Aorta (tissue), 5 donors: ENCODE measurements at regions of chr11 and their contacts with region 1.

Region 1: GRCh38 chr11:12159351-12160099 is 49.1 kb downstream of the MICAL2 start:
- DNase-seq: peak in 1 of 2 donors; percentile 62
- ATAC-seq: no peak
- H3K4me3 ChIP-seq: no peak overlapping the region
- H3K27ac ChIP-seq: peak overlapping the region; percentile 83 to 84
- H3K4me1 ChIP-seq: peaks cover 7 to 35% of the 10 kb centered on the region in 2 donors
- H3K27me3 ChIP-seq: no peaks in the 10 kb centered on the region

Region 2: DNA sequence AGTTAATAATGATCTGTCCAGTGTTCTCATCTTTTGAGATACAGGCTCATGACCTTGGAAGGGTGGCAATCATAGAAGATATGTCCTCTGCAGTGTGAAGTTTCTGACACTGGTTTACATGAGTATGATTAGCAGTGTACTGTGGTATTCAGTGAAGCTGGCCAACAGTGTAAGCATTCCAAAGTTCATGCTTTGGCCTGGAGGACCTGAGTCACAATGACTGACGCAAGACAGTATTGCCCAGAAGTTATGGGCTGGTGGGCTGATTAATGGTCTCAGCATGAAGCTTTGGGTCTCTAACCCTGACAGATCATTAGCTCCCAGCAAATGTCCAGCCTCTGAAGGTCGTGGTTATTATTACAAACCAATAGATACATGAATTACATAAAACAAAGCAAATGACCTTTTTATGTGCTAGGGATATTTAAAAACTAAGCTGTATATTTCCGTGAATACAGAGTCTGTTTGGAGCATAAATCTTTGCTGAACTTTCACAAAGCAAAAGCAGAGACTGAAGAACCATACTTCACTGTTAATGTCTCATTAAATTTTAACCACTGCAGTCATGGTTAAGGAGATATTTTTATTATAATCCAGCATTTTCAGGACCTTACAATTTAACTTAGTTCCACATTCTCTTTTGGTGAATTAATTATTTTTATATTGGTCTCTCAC is 346.1 kb before region 1 on chr11:
- intact Hi-C with region 1: no loop called
- DNase-seq: peak; percentile 50 to 73
- ATAC-seq: peak; percentile 90
- H3K4me3 ChIP-seq: no peak overlapping the region
- H3K27ac ChIP-seq: no peak overlapping the region
- H3K4me1 ChIP-seq: no peaks in the 10 kb centered on the region
- H3K27me3 ChIP-seq: no peaks in the 10 kb centered on the region

Region 3: DNA sequence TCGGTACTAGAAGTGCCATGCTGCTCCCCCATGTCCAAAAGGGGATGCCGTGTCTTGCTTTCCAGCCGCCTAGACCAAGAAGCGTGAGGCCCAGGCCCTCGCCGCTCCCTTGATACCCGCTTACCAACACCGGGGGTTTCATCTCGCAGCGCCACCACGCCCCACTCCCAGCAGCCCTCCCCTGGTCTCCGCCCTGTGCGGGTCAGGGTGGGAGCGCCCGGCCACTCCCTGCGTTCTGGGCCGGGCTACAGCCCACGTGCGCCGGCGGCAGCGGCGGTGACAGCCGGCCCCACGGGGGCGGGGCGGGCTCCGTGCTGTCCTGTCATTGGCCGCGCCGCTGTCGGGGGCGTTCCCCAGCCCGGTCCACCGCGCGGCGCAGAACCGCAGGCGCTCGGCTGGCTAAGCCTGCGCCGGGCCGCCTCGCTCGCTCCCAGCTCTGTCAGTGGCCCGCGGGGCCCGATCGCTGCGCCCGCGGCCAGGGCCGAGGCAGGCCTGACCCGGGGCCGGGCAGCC is 49.3 kb before region 1 on chr11 and contains the start of gene MICAL2:
- intact Hi-C with region 1: loop called in 1 of 2 experiments (anchors 5 kb)
- DNase-seq: peak; percentile 94 to 96
- ATAC-seq: peak; percentile 95
- H3K4me3 ChIP-seq: peak within 1 kb of the TSS; percentile 63 to 69
- H3K27ac ChIP-seq: peak within 1 kb of the TSS; percentile 83 to 90
- H3K4me1 ChIP-seq: peaks cover 2 to 5% of the 10 kb centered on the region in 2 donors
- H3K27me3 ChIP-seq: no peaks in the 10 kb centered on the region
- total RNA-seq, gene MICAL2: 315 to 605 TPM

Region 4: DNA sequence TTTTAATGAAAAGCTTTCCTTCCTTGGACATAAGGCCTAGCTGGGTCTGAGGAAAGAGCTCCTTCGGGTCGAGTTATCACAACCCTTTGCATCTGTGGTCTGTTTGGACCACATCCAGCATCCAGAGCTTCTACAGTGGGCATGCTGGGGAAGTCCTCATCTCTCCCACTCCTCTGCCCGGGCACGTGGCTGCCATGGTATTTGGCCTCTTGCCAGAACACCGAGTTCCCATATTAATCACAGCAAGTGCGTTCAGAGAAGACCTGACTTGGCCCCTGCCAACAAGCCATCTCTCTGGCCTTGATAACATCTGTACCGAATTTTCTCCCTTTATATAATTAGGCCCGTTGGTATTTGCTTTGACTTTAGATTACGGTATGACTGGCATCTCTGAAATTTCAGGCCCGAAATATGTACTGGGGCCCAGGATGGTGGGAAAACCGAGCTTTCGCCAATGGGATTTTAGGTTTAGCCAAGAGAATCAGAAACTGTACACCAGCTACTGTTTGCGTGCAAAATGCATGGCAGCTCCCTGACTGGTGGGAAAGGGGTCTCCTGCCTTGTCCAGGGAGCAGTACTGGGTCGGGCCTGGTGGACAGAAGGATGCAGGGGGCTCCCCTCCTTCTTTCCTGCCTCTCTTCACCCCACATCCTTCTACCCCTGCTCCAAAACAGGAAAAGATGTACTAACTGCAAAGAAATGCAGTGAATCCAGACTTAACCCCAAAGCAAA is 40.9 kb after region 1 on chr11:
- intact Hi-C with region 1: loop called in 1 of 2 experiments (anchors 5 kb)
- DNase-seq: peak; percentile 83 to 85
- ATAC-seq: no peak
- H3K4me3 ChIP-seq: no peak overlapping the region
- H3K27ac ChIP-seq: peak overlapping the region; percentile 95 to 99
- H3K4me1 ChIP-seq: peaks cover 9 to 11% of the 10 kb centered on the region in 2 donors
- H3K27me3 ChIP-seq: no peaks in the 10 kb centered on the region

Region 5: GRCh38 chr11:12235947-12236743 is 76.6 kb after region 1 on chr11:
- intact Hi-C with region 1: loop called (anchors 2 to 5 kb)
- DNase-seq: peak in 1 of 2 donors; percentile 68
- ATAC-seq: peak; percentile 53
- H3K4me3 ChIP-seq: no peak overlapping the region
- H3K27ac ChIP-seq: peak overlapping the region; percentile 98 to 99
- H3K4me1 ChIP-seq: peaks cover 3 to 7% of the 10 kb centered on the region in 2 donors
- H3K27me3 ChIP-seq: no peaks in the 10 kb centered on the region

Region 6: DNA sequence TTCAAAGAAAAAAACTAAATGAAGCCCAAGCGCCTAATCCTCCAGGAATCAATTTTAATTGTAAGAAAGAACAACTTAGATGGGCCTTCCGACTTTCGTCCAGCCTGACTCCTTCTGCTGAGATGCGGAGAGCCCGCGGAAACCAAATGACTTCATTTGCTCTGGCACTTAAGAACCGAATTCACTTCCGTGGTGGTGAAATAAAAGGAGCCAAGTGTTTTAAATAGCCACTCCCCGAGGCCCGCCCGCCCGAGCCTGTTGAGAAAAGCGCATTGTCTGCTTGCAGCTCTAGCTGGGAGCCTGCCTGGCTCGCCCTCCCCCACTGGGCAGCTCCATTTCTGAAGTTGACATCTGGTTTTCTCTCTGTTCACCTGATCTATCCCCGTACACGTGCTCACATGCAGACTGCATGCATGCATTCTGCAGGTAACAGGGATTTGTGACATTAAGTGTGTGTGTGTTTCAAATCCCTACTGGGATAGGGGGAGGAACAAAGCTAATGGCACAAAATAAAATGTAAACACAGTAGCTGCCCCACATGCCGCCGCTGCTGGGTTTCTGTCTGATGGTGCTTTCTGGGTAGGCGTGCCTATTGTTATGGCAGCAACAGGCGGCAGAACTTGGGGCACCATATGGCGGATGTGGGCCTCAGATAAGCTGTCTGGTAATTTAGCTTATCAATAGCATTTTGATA is 520.9 kb after region 1 on chr11:
- intact Hi-C with region 1: no loop called
- DNase-seq: peak; percentile 84 to 91
- ATAC-seq: peak; percentile 68
- H3K4me3 ChIP-seq: no peak overlapping the region
- H3K27ac ChIP-seq: peak overlapping the region in 1 of 2 donors; percentile 9
- H3K4me1 ChIP-seq: peaks cover 0 to 5% of the 10 kb centered on the region in 2 donors
- H3K27me3 ChIP-seq: no peaks in the 10 kb centered on the region